ENCODE measurements at regions of chr9 and their contacts with region 1.

Region 1: GRCh38 chr9:133184962-133185361 is 21.2 kb upstream of the GBGT1 start:
- DNase-seq: peak; percentile 83 to 92 (median 90)
- H3K4me3 ChIP-seq: peak overlapping the region in 2 of 7 experiments; percentile 19 to 23
- H3K27ac ChIP-seq: no peak overlapping the region
- H3K4me1 ChIP-seq: peaks cover 0 to 16% (median 8%) of the 10 kb centered on the region in 4 experiments
- H3K27me3 ChIP-seq: peaks cover 0 to 6% (median 0%) of the 10 kb centered on the region in 5 experiments

Region 2: GRCh38 chr9:133060417-133060841 is 124.5 kb before region 1 on chr9:
- CTCF ChIA-PET with region 1: no interaction called
- POLR2A ChIA-PET with region 1: no interaction called
- DNase-seq: peak; percentile 31 to 78 (median 68)
- H3K4me3 ChIP-seq: peak overlapping the region in 4 of 7 experiments; percentile 11 to 57 (median 32)
- H3K27ac ChIP-seq: peak overlapping the region in 1 of 2 experiments; percentile 77
- H3K4me1 ChIP-seq: peaks cover 5 to 76% (median 70%) of the 10 kb centered on the region in 4 experiments
- H3K27me3 ChIP-seq: no peaks in the 10 kb centered on the region

Region 3: GRCh38 chr9:133170716-133171559 is 14.0 kb before region 1 on chr9:
- CTCF ChIA-PET with region 1: interaction called, 14 read pairs
- POLR2A ChIA-PET with region 1: interaction called, 4 read pairs
- DNase-seq: no peak
- H3K4me3 ChIP-seq: no peak overlapping the region
- H3K27ac ChIP-seq: no peak overlapping the region
- H3K4me1 ChIP-seq: peaks cover 0 to 5% (median 0%) of the 10 kb centered on the region in 4 experiments
- H3K27me3 ChIP-seq: no peaks in the 10 kb centered on the region

Region 4: DNA sequence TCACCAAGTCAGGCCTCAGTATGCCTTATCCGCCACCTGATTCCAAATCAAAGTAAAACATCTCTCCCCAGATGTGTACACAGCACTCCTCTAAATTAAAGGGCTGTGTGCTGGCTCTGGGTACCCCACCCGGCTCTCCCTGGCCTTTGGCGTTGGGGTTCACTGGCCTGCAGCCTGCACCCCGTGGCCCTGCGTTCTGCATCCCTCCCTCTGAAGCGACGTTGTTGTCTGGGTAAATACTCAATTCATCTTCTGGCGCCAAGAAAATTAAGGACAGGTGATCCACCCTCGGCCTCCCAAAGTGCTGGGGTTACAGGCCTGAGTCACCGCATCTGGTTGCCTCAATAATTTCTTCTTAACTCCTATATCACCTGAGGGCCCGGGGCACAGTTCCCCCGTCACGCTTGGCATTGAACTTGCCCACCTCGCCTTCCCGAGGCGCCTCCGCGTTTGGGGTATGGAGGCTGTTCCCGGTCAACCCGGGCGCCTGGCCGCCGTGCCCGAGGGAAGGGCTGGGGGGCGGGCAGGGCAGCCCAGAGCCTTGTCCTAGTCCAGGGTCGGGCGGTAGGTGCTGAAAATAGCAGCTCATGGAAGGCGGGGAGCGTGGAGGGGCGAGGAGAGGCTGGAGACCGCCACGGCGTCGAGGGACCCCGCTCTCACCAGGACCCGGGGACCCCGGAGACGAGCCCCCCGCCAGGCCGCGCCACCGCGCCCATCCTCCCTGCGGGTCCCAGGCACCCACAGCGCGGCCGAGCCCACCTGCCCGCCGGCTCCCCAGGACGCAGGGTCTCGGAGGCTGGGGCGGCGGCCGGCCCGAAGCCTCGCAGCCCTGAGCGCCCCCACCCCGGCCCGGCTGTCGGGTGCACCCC is 89.5 kb after region 1 on chr9:
- CTCF ChIA-PET with region 1: interaction called, 24 read pairs
- POLR2A ChIA-PET with region 1: no interaction called
- DNase-seq: peak in 1 of 3 donors; percentile 55
- H3K4me3 ChIP-seq: peak overlapping the region; percentile 44 to 83 (median 64)
- H3K27ac ChIP-seq: peak overlapping the region; percentile 52 to 75
- H3K4me1 ChIP-seq: peaks cover 4 to 55% (median 27%) of the 10 kb centered on the region in 4 experiments
- H3K27me3 ChIP-seq: peaks cover 0 to 5% (median 0%) of the 10 kb centered on the region in 5 experiments

Region 5: GRCh38 chr9:133342069-133342406 is 157.1 kb after region 1 on chr9:
- CTCF ChIA-PET with region 1: interaction called, 11 read pairs
- POLR2A ChIA-PET with region 1: no interaction called
- DNase-seq: no peak
- H3K4me3 ChIP-seq: peak overlapping the region in 1 of 7 experiments; percentile 23
- H3K27ac ChIP-seq: peak overlapping the region in 1 of 2 experiments; percentile 65
- H3K4me1 ChIP-seq: peaks cover 3 to 61% (median 57%) of the 10 kb centered on the region in 4 experiments
- H3K27me3 ChIP-seq: no peaks in the 10 kb centered on the region

Region 6: GRCh38 chr9:133356391-133357091 is 171.6 kb after region 1 on chr9 and contains the starts of genes SURF1 and SURF2:
- CTCF ChIA-PET with region 1: interaction called, 30 read pairs
- POLR2A ChIA-PET with region 1: no interaction called
- DNase-seq: peak; percentile 67 to 88 (median 71)
- H3K4me3 ChIP-seq: peak within 1 kb of the TSS; percentile 37 to 89 (median 84)
- H3K27ac ChIP-seq: peak within 1 kb of the TSS; percentile 50 to 85
- H3K4me1 ChIP-seq: peaks cover 3 to 22% (median 21%) of the 10 kb centered on the region in 4 experiments
- H3K27me3 ChIP-seq: no peaks in the 10 kb centered on the region